WTC11 (cell line): ENCODE measurements at regions of chr4 and their contacts with region 1.

Region 1: DNA sequence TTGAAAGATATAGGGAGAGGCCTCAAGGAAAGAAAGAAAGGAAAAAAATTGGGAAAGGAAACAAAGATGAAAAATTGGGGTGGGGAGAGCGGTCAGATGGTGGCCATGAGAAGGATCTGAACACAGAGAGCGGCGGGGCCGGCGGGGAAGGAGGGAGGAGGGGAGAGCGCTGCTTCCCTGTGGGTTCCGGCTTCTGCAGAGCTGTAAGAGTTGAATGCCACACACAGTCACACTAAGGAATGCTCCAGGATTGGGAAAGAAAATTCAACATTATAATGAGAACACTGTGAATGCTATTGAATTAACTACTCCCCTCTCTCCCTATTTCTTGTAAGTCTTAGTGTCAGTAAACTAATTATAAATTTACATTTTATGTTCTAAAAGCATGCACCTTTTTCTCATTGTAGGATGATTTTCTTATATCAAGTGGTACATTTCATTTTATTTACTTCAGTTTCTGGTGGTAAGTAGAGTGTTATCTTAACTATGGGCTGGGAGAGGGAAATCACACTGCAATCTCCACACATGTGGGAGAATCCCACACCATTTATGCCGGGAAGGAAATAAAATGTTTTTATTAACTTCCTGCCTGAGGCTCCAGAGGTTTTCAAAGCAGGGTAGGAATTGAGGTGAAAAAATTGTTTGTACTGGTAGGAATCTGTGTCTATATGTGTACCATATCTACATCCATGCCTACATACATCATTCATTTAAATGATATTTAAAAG is 904 bp downstream of the F11 start:
- DNase-seq: peak; percentile 61
- ATAC-seq: peak; percentile 90
- H3K4me3 Mint-ChIP-seq: peak overlapping the region; percentile 65
- H3K27ac Mint-ChIP-seq: peak overlapping the region; percentile 100
- H3K4me1 Mint-ChIP-seq: peaks cover 56% of the 10 kb centered on the region
- H3K27me3 Mint-ChIP-seq: no peaks in the 10 kb centered on the region
- CTCF ChIP-seq: no peak

Region 2: DNA sequence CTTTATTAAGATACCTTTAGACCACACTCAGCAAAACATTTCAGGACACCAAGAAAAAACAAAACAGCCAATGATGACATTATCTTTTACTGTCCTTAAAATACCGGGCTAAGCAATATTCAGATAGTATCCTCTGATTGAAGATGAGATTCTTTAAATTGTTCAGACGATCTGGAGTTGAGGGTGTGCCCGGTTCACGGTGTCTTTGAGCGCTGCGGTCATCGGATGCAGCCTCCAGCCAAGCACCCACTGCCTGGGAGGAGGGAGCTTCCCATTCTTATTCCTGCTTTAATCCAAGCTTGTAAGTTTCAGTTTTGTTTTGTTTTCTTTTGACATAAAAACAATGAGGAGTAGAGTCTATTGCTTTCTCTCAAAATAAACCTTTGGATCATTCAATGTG is 148.3 kb before region 1 on chr4:
- CTCF ChIA-PET with region 1: no interaction called
- POLR2A ChIA-PET with region 1: no interaction called
- DNase-seq: no peak
- ATAC-seq: no peak
- H3K4me3 Mint-ChIP-seq: no peak overlapping the region
- H3K27ac Mint-ChIP-seq: no peak overlapping the region
- H3K4me1 Mint-ChIP-seq: peaks cover 21% of the 10 kb centered on the region
- H3K27me3 Mint-ChIP-seq: no peaks in the 10 kb centered on the region; the same call in 1 of the 2 replicates
- CTCF ChIP-seq: no peak

Region 3: GRCh38 chr4:186243331-186243730 is 23.6 kb before region 1 on chr4:
- CTCF ChIA-PET with region 1: no interaction called
- POLR2A ChIA-PET with region 1: interaction called, 15 read pairs
- DNase-seq: no peak
- ATAC-seq: no peak
- H3K4me3 Mint-ChIP-seq: no peak overlapping the region
- H3K27ac Mint-ChIP-seq: no peak overlapping the region
- H3K4me1 Mint-ChIP-seq: peaks cover 5% of the 10 kb centered on the region
- H3K27me3 Mint-ChIP-seq: peaks cover 3% of the 10 kb centered on the region; the same call in 1 of the 2 replicates
- CTCF ChIP-seq: no peak

Region 4: GRCh38 chr4:186249785-186250754 is 16.8 kb before region 1 on chr4:
- CTCF ChIA-PET with region 1: interaction called, 3 read pairs
- POLR2A ChIA-PET with region 1: interaction called, 13 read pairs
- DNase-seq: no peak
- ATAC-seq: peak; percentile 67
- H3K4me3 Mint-ChIP-seq: peak overlapping the region; percentile 56
- H3K27ac Mint-ChIP-seq: peak overlapping the region; percentile 100
- H3K4me1 Mint-ChIP-seq: peaks cover 56% of the 10 kb centered on the region
- H3K27me3 Mint-ChIP-seq: peaks cover 3% of the 10 kb centered on the region; the same call in 1 of the 2 replicates
- CTCF ChIP-seq: no peak

Region 5: DNA sequence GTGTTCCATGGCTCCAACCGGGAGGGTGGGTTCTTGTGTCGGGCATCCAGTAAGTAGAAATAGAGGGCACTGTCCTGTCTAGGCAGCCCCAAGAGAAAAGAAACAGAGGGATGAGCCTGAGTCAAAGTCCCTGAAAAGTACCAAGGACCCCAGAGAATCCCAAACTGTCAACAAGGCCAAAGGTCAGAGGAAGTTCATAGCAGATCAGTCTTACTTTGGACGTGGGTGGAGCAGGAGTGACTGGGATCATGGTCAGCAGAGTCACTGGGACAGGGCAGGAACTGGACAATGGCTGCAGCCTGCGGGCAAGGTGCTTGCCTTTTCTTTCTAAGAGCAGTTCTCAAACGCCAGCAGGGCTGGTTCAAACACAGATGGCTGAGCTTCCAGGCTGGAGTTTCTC is 16.4 kb after region 1 on chr4:
- CTCF ChIA-PET with region 1: no interaction called
- POLR2A ChIA-PET with region 1: no interaction called
- DNase-seq: no peak
- ATAC-seq: no peak
- H3K4me3 Mint-ChIP-seq: no peak overlapping the region
- H3K27ac Mint-ChIP-seq: no peak overlapping the region
- H3K4me1 Mint-ChIP-seq: peaks cover 9% of the 10 kb centered on the region; the same call in 1 of the 2 replicates
- H3K27me3 Mint-ChIP-seq: no peaks in the 10 kb centered on the region
- CTCF ChIP-seq: no peak

Region 6: DNA sequence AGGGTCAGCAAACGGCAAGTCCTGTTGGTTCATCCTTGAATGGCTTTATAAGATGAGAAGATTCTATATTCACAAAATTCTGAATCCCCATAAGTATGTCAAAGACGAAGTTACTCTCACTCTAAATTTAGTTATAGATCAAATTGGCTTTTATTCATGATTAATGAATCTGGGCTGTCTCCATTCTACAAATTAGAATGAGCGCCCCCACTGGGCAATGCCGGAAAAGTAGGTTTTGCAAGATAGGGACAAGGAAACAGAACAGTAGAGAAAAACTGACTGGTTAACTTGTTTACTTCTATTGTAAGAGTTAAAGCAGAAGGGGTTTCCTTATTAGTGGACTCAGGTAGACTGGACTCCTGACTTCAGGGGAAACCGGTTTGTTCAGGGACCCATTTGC is 99.4 kb after region 1 on chr4:
- CTCF ChIA-PET with region 1: no interaction called
- POLR2A ChIA-PET with region 1: no interaction called
- DNase-seq: peak; percentile 38
- ATAC-seq: no peak
- H3K4me3 Mint-ChIP-seq: no peak overlapping the region
- H3K27ac Mint-ChIP-seq: no peak overlapping the region
- H3K4me1 Mint-ChIP-seq: no peaks in the 10 kb centered on the region
- H3K27me3 Mint-ChIP-seq: peaks cover 8% of the 10 kb centered on the region
- CTCF ChIP-seq: no peak

Region 7: DNA sequence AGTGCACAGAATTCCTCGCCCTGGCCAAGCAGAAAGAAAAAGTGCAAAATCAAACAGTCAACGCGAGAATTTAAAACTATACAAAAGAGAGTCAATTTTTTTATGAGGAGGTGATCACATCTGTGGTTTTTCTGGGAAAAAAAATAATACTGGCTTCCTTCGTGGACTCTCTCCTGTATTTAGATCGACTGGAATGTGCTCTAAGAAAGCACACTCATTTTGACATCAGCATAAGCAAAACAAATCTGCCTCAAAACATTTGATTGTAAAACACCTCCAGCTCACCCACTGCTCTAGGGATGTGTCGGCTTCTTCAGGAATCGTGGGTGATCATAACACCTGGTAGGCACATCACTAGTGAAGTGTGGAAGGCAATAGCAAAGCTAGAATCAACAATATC is 874.2 kb after region 1 on chr4:
- CTCF ChIA-PET with region 1: no interaction called
- POLR2A ChIA-PET with region 1: no interaction called
- DNase-seq: no peak
- ATAC-seq: no peak
- H3K4me3 Mint-ChIP-seq: no peak overlapping the region
- H3K27ac Mint-ChIP-seq: no peak overlapping the region
- H3K4me1 Mint-ChIP-seq: no peaks in the 10 kb centered on the region
- H3K27me3 Mint-ChIP-seq: no peaks in the 10 kb centered on the region
- CTCF ChIP-seq: no peak